PC-9 (cell line): ENCODE measurements at regions of chr7 and their contacts with region 1.

Region 1: GRCh38 chr7:107594961-107595737 is 15.1 kb downstream of the BCAP29 start:
- DNase-seq: peak; percentile 73 to 97
- H3K4me3 ChIP-seq: no peak overlapping the region
- H3K27ac ChIP-seq: peak overlapping the region; percentile 84
- H3K4me1 ChIP-seq: peaks cover 39% of the 10 kb centered on the region
- H3K27me3 ChIP-seq: no peaks in the 10 kb centered on the region
- CTCF ChIP-seq: no peak

Region 2: GRCh38 chr7:107551936-107552335 is 43.2 kb before region 1 on chr7:
- CTCF ChIA-PET with region 1: no interaction called
- POLR2A ChIA-PET with region 1: interaction called, 10 read pairs
- intact Hi-C with region 1: no loop called
- DNase-seq: no peak
- H3K4me3 ChIP-seq: no peak overlapping the region
- H3K27ac ChIP-seq: no peak overlapping the region
- H3K4me1 ChIP-seq: no peaks in the 10 kb centered on the region
- H3K27me3 ChIP-seq: no peaks in the 10 kb centered on the region
- CTCF ChIP-seq: no peak

Region 3: DNA sequence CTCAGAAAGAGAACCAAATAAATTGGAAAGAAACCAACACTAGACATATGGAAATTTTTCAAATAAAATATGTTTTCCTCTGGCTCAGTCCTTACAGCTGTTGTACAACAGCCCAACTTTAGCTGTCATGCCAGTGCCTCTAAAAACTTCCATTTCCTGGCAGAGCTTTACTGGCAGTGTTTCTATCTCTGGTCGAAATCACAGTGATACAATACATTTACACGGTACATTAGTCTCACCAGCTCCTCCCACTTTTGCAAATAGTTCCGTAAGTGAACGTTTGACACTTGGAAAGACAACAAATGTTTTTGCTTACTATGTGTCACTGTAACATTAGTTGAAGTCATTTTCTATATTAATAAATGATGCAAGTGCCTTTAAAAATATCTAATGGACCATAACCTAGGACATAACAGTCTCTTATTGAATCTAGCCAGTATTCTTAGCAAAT is 14.7 kb after region 1 on chr7:
- CTCF ChIA-PET with region 1: interaction called, 8 read pairs
- POLR2A ChIA-PET with region 1: interaction called, 10 read pairs
- intact Hi-C with region 1: loop called (anchors 2 kb)
- DNase-seq: no peak
- H3K4me3 ChIP-seq: no peak overlapping the region
- H3K27ac ChIP-seq: no peak overlapping the region
- H3K4me1 ChIP-seq: peaks cover 23% of the 10 kb centered on the region
- H3K27me3 ChIP-seq: no peaks in the 10 kb centered on the region
- CTCF ChIP-seq: no peak

Region 4: DNA sequence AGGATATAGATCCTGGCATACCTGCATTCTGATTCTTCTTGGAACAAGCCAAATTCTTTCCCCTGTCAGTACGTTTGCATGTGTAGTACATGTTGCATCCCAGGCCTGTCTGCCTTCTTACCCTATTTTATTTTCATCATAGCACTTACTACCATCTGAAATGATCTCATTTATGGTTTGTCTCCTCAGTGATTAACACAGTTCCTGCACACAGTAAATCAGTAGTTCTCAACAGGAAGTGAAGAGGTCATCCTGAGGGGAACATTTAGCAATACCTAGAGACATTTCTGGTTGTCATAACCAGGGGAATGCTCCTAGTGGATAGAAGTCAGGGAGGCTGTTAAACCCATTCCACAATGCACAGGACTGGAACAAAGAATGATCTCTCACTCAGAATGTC is 27.3 kb after region 1 on chr7:
- CTCF ChIA-PET with region 1: interaction called, 3 read pairs
- POLR2A ChIA-PET with region 1: interaction called, 5 read pairs
- intact Hi-C with region 1: loop called (anchors 1 kb)
- DNase-seq: peak in 1 of 2 experiments; percentile 86
- H3K4me3 ChIP-seq: no peak overlapping the region
- H3K27ac ChIP-seq: 0 out of 2 replicates have a peak overlapping the region, but pooled peaks have one; percentile 33
- H3K4me1 ChIP-seq: peaks cover 20% of the 10 kb centered on the region
- H3K27me3 ChIP-seq: no peaks in the 10 kb centered on the region
- CTCF ChIP-seq: no peak